ENCODE measurements at regions of chr19 and their contacts with region 1.

Region 1: GRCh38 chr19:40662921-40663694 is 27.3 kb downstream of the NUMBL start:
- H3K4me3 Mint-ChIP-seq: peak overlapping the region; percentile 81
- H3K27ac Mint-ChIP-seq: peak overlapping the region; percentile 79
- H3K4me1 Mint-ChIP-seq: peaks cover 21% of the 10 kb centered on the region
- H3K27me3 Mint-ChIP-seq: peaks cover 6% of the 10 kb centered on the region

Region 2: DNA sequence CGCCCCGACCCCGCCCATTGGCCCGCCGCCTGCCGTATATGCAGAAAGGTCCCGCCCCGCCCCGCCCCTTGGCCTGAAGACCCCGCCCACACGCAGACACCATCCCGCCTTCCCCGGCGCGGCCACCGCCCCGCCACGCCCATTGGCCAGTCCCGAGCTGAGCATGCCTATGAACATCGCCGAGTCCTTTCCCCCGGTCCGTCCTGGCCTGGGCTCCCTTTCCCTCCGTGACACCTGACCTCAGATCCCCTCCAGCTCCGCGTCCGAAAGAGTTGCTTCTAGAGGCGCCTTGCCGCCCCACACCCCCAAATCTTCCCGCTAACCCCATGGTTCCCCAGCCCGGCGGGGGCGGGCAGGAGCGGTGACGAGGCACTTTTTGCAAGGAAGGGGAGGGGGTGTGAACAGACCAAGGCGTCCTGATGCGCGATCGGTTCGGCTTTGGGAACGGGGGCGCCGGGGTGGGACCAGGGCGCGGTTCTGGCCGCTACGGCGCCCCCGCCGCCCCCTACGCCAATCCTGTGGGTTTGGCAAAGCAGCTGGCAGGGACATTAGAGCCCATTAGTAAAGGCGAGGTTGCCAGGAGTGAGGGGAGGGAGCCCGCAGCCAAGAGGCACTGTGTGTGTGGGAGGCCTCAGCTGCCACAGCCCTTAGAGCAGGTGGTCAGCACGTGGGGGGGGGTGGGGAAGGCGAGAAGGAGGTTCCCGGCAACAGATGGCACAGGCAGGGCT is 27.7 kb after region 1 on chr19:
- intact Hi-C with region 1: loop called (anchors 2 kb)
- H3K4me3 Mint-ChIP-seq: peak overlapping the region; percentile 95
- H3K27ac Mint-ChIP-seq: peak overlapping the region; percentile 97
- H3K4me1 Mint-ChIP-seq: peaks cover 12% of the 10 kb centered on the region
- H3K27me3 Mint-ChIP-seq: no peaks in the 10 kb centered on the region

Region 3: DNA sequence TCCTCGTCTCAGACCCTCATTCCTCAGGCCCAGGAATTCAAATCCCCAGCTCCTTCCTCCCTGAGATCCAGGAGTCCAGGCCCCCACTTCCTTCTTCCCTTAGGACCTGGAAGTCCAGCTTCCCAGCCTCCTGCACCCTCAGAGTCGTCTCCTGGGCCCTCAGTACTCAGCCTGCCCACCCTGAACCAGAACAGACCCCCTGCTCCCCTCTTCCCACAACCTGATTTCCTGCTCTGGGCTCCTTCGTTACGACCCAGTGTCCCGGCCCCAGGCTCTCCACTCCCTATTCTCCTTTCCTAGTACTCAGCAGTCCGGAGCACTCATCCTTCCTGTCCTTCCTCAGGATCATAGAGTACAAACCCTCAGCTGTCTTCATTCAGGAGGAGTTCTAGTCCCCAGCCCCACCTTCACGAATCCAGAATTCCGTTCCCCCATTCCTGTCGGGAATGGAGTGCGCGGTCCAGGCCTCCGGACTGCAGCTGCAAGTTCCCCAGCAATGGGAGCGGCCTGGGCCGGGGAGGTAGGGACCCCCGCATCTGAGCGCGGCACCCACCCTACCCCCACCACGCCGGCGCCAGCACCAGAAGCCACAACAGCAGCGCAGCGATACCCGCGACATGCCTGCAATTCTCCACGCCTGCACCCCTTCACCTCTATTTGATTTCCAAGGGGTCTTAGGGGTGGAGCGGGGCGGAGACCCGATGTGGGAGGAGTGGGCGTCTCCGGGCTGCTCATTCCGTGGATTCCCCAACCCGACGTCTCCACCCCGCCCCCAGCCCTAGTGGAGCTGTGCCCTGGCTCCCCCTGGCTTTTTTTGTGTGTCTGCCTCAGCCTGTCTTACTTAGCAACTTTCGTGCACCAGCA is 148.6 kb after region 1 on chr19:
- intact Hi-C with region 1: loop called (anchors 5 kb)
- H3K4me3 Mint-ChIP-seq: peak overlapping the region; percentile 85
- H3K27ac Mint-ChIP-seq: peak overlapping the region; percentile 87
- H3K4me1 Mint-ChIP-seq: peaks cover 62% of the 10 kb centered on the region
- H3K27me3 Mint-ChIP-seq: peaks cover 40% of the 10 kb centered on the region

Region 4: DNA sequence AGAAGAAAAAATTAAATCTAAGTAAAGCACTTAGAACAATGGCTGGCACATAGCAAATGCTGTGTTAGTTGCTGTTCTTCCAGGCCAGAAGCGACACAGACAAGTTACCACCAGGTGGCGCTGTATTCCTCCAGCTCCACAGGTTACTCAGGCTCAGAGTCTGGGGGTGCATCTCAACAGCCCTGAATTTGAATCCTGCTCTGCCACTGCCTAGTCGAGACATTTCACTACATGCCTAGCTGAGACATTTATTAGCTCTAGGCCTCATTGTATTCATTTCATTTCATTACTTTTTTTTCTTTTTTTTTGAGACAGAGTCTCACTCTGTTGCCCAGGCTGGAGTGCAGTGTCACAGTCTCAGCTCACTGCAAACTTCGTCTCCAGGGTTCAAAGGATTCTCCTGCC is 311.5 kb after region 1 on chr19:
- intact Hi-C with region 1: loop called (anchors 5 kb)
- H3K4me3 Mint-ChIP-seq: no peak overlapping the region
- H3K27ac Mint-ChIP-seq: no peak overlapping the region
- H3K4me1 Mint-ChIP-seq: no peaks in the 10 kb centered on the region
- H3K27me3 Mint-ChIP-seq: peaks cover 33% of the 10 kb centered on the region

Region 5: DNA sequence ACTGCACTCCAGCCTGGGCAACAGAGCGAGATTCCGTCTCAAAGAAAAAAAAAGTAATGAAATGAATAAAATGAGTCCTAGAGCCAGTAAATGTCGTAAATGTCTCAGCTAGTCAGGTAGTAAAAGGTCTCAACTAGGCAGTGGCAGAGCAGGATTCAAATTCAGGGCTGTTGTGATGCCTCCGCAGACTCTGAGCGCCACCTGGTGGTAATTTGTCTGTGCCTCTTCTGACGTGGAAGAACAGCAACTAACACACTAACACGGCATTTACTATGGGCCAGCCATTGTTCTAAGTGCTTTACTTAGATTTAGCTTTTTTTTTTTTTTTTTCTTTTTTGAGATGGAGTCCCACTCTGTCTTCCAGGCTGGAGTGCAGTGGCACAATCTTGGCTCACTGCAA is 481.3 kb after region 1 on chr19:
- intact Hi-C with region 1: loop called (anchors 2 kb)
- H3K4me3 Mint-ChIP-seq: no peak overlapping the region
- H3K27ac Mint-ChIP-seq: no peak overlapping the region
- H3K4me1 Mint-ChIP-seq: no peaks in the 10 kb centered on the region
- H3K27me3 Mint-ChIP-seq: peaks cover 27% of the 10 kb centered on the region